GM12878 (cell line): ENCODE measurements at regions of chr12 and their contacts with region 1.

Region 1: GRCh38 chr12:104108755-104109445 is 29.1 kb downstream of the NFYB start:
- DNase-seq: peak; percentile 55
- ATAC-seq: peak; percentile 98
- H3K4me3 ChIP-seq: no peak overlapping the region
- H3K27ac ChIP-seq: no peak overlapping the region
- H3K4me1 ChIP-seq: no peaks in the 10 kb centered on the region
- H3K27me3 ChIP-seq: no peaks in the 10 kb centered on the region
- CTCF ChIP-seq: peak; percentile 85 to 93 (median 86); a peak in 5 of 6 replicates
- EP300 ChIP-seq: no peak
- POLR2A ChIP-seq: no peak
- RAD21 ChIP-seq: peak; percentile 93

Region 2: DNA sequence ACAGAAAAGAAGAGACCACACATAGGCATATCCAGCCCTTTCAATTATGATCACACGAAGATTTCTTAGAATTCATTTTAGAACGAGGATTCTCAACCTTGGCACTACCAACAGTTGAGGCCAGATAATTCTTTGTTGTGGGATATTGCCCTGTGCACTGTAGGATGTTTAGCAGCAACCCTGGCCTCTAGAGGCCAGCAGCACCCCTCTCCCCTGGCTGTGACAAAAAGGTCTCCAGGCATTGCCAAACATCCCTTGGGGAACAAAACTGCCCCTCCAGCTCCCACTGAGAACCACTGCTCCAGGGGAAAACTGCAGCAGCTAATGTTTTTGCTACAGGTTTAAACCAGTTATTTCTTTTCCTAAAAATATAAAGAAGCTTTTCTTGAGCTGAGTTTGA is 275.0 kb before region 1 on chr12:
- CTCF ChIA-PET with region 1: interaction called, 10 read pairs
- POLR2A ChIA-PET with region 1: no interaction called
- RAD21 ChIA-PET with region 1: no interaction called
- SMC1A ChIA-PET with region 1: interaction called, 9 read pairs
- in situ Hi-C with region 1: no loop called
- intact Hi-C with region 1: no loop called
- DNase-seq: no peak
- ATAC-seq: peak; percentile 44
- H3K4me3 ChIP-seq: no peak overlapping the region
- H3K27ac ChIP-seq: no peak overlapping the region
- H3K4me1 ChIP-seq: peaks cover 6% of the 10 kb centered on the region; the same call in 1 of the 2 replicates
- H3K27me3 ChIP-seq: no peaks in the 10 kb centered on the region
- CTCF ChIP-seq: peak in 2 of 3 experiments; percentile 3 to 19; a peak in 2 of 6 replicates
- EP300 ChIP-seq: no peak
- POLR2A ChIP-seq: no peak
- RAD21 ChIP-seq: no peak

Region 3: GRCh38 chr12:103924761-103925641 is 183.9 kb before region 1 on chr12:
- CTCF ChIA-PET with region 1: interaction called, 13 read pairs
- POLR2A ChIA-PET with region 1: no interaction called
- RAD21 ChIA-PET with region 1: interaction called, 7 read pairs
- SMC1A ChIA-PET with region 1: interaction called, 8 read pairs
- in situ Hi-C with region 1: no loop called
- intact Hi-C with region 1: no loop called
- DNase-seq: peak; percentile 96
- ATAC-seq: peak; percentile 60
- H3K4me3 ChIP-seq: peak overlapping the region; percentile 56
- H3K27ac ChIP-seq: peak overlapping the region; percentile 74
- H3K4me1 ChIP-seq: peaks cover 24% of the 10 kb centered on the region
- H3K27me3 ChIP-seq: no peaks in the 10 kb centered on the region
- CTCF ChIP-seq: no peak
- EP300 ChIP-seq: peak; percentile 71 to 77; a peak in 2 of 4 replicates
- POLR2A ChIP-seq: peak; percentile 92
- RAD21 ChIP-seq: 0 out of 2 replicates have a peak, but pooled peaks have one; percentile 15

Region 4: GRCh38 chr12:103965590-103966504 is 143.1 kb before region 1 on chr12 and contains the start of gene TDG:
- CTCF ChIA-PET with region 1: interaction called, 7 read pairs
- POLR2A ChIA-PET with region 1: interaction called, 3 read pairs
- RAD21 ChIA-PET with region 1: interaction called, 5 read pairs
- SMC1A ChIA-PET with region 1: interaction called, 11 read pairs
- in situ Hi-C with region 1: no loop called
- intact Hi-C with region 1: loop called (anchors 5 kb)
- DNase-seq: peak; percentile 97
- ATAC-seq: peak; percentile 96
- H3K4me3 ChIP-seq: peak within 1 kb of the TSS; percentile 92
- H3K27ac ChIP-seq: peak within 1 kb of the TSS; percentile 94
- H3K4me1 ChIP-seq: peaks cover 10% of the 10 kb centered on the region
- H3K27me3 ChIP-seq: no peaks in the 10 kb centered on the region
- CTCF ChIP-seq: peak in 1 of 3 experiments; percentile 23; a peak in 1 of 6 replicates
- EP300 ChIP-seq: no peak
- POLR2A ChIP-seq: peak; percentile 96
- RAD21 ChIP-seq: no peak
- polyA plus RNA-seq, gene TDG: 29.7 to 33.7 TPM

Region 5: DNA sequence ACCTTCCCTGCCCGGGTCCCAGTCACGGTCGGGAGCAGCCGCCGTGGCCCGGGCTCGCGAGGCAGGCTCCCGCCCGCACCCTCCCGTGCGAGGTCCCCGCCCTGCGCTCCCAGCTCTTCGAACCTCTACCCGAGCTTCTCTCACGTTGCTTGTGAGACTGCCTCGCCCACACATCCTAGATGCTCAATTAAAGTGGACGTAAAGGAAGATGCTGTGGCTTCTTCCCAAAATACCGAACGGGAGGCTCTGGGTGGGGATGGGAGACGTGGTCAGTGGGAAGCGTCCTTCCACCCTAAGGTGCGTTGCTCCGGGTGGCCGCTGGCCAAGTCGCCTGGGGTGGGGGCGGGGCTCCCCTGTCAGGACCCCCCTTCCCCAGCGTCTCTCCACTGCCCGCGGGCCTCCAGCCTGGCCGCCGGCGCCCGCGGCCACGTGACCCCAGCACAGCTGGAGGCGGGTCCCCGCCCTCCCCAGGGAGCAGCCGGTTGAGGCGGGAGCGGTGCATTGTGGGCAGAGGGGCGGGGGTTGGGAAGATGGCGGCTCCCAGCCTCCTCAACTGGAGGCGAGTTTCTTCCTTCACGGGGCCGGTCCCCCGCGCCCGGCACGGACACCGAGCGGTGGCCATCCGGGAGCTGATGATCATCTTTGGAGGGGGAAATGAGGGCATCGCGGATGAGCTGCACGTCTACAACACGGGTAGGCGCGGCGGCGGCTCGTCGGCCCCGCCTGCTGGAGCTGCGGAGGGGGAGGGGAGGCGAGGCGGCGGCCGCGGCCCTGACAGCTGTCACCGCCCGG is 44.7 kb before region 1 on chr12 and contains the start of gene HCFC2:
- CTCF ChIA-PET with region 1: interaction called, 118 read pairs
- POLR2A ChIA-PET with region 1: interaction called, 6 read pairs
- RAD21 ChIA-PET with region 1: interaction called, 50 read pairs
- SMC1A ChIA-PET with region 1: interaction called, 75 read pairs
- in situ Hi-C with region 1: loop called (anchors 5 kb)
- intact Hi-C with region 1: no loop called
- DNase-seq: peak; percentile 61
- ATAC-seq: peak; percentile 94
- H3K4me3 ChIP-seq: peak within 1 kb of the TSS; percentile 88
- H3K27ac ChIP-seq: peak within 1 kb of the TSS; percentile 81
- H3K4me1 ChIP-seq: no peaks in the 10 kb centered on the region
- H3K27me3 ChIP-seq: no peaks in the 10 kb centered on the region; a peak in 1 of 4 replicates
- CTCF ChIP-seq: no peak
- EP300 ChIP-seq: peak in 1 of 2 experiments; percentile 17; a peak in 1 of 4 replicates
- POLR2A ChIP-seq: peak; percentile 81
- RAD21 ChIP-seq: no peak
- polyA plus RNA-seq, gene HCFC2: 1.8 to 3.8 TPM

Region 6: GRCh38 chr12:104097954-104098353 is 10.9 kb before region 1 on chr12:
- CTCF ChIA-PET with region 1: interaction called, 46 read pairs
- POLR2A ChIA-PET with region 1: no interaction called
- RAD21 ChIA-PET with region 1: interaction called, 12 read pairs
- SMC1A ChIA-PET with region 1: interaction called, 29 read pairs
- in situ Hi-C with region 1: no loop called
- intact Hi-C with region 1: no loop called
- DNase-seq: no peak
- ATAC-seq: no peak
- H3K4me3 ChIP-seq: no peak overlapping the region
- H3K27ac ChIP-seq: no peak overlapping the region
- H3K4me1 ChIP-seq: no peaks in the 10 kb centered on the region
- H3K27me3 ChIP-seq: no peaks in the 10 kb centered on the region
- CTCF ChIP-seq: no peak
- EP300 ChIP-seq: no peak
- POLR2A ChIP-seq: no peak
- RAD21 ChIP-seq: no peak

Region 7: DNA sequence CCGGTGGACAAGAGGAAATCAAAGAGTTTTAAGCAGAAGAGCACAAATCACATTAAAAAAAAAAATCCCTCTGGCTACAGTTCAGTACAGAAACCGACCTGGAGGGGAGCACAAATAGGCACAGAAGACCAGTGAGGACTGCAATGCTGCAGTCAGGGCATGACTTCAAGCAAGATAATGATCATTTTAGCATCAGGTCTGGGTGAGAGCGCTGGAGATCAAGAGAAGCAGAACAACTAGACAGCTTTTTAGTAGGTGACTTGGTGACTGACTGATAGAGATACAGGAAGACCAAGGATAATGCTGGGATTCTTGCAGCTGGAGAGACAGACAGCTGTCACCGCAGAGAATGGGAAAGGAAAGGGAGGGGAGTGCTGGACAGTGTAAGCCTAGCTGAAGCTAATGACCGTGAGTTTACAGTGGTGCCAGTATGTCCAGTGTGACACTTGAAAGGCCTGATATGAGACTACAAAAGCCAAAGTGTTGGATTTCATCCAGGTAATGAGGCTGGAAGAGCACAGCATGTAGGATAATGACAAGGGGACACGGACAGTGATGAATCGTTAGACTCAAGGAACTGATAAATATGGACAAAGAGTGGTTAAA is 23.6 kb after region 1 on chr12:
- CTCF ChIA-PET with region 1: interaction called, 35 read pairs
- POLR2A ChIA-PET with region 1: interaction called, 3 read pairs
- RAD21 ChIA-PET with region 1: no interaction called
- SMC1A ChIA-PET with region 1: interaction called, 15 read pairs
- in situ Hi-C with region 1: no loop called
- intact Hi-C with region 1: no loop called
- DNase-seq: no peak
- ATAC-seq: no peak; the same call in 2 of the 3 replicates
- H3K4me3 ChIP-seq: no peak overlapping the region
- H3K27ac ChIP-seq: no peak overlapping the region
- H3K4me1 ChIP-seq: peaks cover 6% of the 10 kb centered on the region; the same call in 1 of the 2 replicates
- H3K27me3 ChIP-seq: no peaks in the 10 kb centered on the region
- CTCF ChIP-seq: no peak
- EP300 ChIP-seq: no peak
- POLR2A ChIP-seq: no peak
- RAD21 ChIP-seq: no peak

Region 8: GRCh38 chr12:104371043-104371870 is 262.4 kb after region 1 on chr12:
- CTCF ChIA-PET with region 1: no interaction called
- POLR2A ChIA-PET with region 1: no interaction called
- RAD21 ChIA-PET with region 1: no interaction called
- SMC1A ChIA-PET with region 1: no interaction called
- in situ Hi-C with region 1: no loop called
- intact Hi-C with region 1: no loop called
- DNase-seq: no peak
- ATAC-seq: no peak
- H3K4me3 ChIP-seq: no peak overlapping the region
- H3K27ac ChIP-seq: no peak overlapping the region
- H3K4me1 ChIP-seq: no peaks in the 10 kb centered on the region
- H3K27me3 ChIP-seq: no peaks in the 10 kb centered on the region
- CTCF ChIP-seq: no peak
- EP300 ChIP-seq: no peak
- POLR2A ChIP-seq: no peak
- RAD21 ChIP-seq: no peak

Region 9: DNA sequence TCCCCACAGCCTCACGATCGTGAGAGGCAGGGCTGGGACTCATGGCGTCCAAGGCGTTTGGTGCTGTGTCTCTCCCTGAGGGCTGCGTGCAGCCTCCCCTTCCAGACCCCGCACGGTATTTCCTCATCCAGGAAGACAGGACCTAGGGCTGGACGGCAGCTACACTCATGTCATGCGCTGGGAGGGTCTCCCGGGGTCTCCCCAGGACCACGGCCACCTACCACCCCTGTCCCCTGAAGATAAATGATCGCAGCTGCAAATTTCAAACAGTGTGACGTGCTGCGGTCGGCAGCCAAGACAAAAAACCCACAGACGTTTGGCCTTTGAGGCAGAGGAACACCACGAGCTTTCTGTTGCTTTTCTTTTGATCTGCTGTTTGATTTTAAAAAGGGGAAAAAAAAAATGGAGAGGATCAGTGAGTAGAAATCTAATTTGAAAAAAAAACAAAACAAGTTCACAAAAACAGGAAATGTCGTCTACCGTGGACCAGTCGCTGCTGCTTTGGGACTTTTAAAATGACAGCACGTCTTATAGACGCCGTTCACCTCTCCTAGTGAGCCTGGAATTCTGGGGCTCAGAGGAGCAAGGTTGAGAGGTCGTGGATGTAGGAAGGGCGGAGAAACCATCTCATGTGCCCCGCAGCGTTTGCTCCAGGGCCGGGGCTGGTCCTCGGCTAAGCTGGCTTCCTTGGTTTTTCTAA is 611.6 kb after region 1 on chr12:
- CTCF ChIA-PET with region 1: no interaction called
- POLR2A ChIA-PET with region 1: no interaction called
- RAD21 ChIA-PET with region 1: no interaction called
- SMC1A ChIA-PET with region 1: no interaction called
- in situ Hi-C with region 1: no loop called
- intact Hi-C with region 1: no loop called
- DNase-seq: no peak
- ATAC-seq: peak; percentile 71
- H3K4me3 ChIP-seq: peak overlapping the region; percentile 40
- H3K27ac ChIP-seq: peak overlapping the region; percentile 92
- H3K4me1 ChIP-seq: peaks cover 35% of the 10 kb centered on the region
- H3K27me3 ChIP-seq: no peaks in the 10 kb centered on the region; a peak in 1 of 4 replicates
- CTCF ChIP-seq: no peak
- EP300 ChIP-seq: peak; percentile 54 to 68; a peak in 2 of 4 replicates
- POLR2A ChIP-seq: peak; percentile 56; the same call in 1 of the 2 replicates
- RAD21 ChIP-seq: no peak